ENCODE measurements at regions of chr17 and their contacts with region 1.

Region 1: DNA sequence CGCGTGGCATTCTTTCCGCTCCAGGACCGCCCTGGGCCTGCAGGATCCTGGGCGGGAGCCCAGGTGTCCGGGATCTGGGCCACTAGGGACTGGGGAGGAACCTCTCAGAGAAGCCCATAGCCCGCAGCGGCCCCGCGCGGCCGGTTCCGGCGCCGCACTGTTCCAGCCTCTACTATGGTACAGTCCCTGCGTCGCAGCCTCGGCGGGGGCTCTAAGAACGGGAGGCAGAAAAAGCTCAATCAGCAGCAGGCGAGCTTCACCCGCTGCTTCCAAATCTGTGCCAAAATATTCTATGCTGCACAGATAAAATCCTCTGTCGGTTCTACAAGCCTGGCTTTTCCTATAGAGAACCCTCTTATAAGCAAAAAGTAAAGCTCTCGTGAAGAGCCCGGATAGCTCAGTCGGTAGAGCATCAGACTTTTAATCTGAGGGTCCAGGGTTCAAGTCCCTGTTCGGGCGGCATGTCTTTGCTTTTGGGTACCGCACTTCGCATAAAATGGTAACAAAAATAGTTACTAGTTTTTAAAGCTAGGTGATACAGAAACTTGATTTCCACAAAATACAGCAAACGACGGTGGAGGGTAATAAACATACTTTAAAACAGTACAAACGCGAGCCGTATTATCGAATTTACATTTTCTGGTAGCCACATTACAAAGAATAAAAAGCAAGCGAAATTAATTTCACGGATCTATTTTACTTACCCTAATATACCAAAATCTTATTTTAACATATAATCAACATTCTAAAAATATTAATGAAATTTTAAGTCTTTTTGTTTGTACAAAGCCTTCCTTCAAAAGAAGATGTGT is 661 bp upstream of the ALOXE3 start:
- DNase-seq: peak; percentile 88 to 93 (median 91)
- ATAC-seq: peak; percentile 76 to 88 (median 84)
- H3K4me3 ChIP-seq: peak overlapping the region; percentile 29 to 49 (median 37)
- H3K27ac ChIP-seq: peak overlapping the region; percentile 13 to 41 (median 33)
- H3K4me1 ChIP-seq: peaks cover 0 to 45% (median 10%) of the 10 kb centered on the region in 4 donors
- H3K27me3 ChIP-seq: peaks cover 0 to 35% of the 10 kb centered on the region in 2 donors
- CTCF ChIP-seq: peak; percentile 86 to 94 (median 90)
- POLR2A ChIP-seq: no peak

Region 2: DNA sequence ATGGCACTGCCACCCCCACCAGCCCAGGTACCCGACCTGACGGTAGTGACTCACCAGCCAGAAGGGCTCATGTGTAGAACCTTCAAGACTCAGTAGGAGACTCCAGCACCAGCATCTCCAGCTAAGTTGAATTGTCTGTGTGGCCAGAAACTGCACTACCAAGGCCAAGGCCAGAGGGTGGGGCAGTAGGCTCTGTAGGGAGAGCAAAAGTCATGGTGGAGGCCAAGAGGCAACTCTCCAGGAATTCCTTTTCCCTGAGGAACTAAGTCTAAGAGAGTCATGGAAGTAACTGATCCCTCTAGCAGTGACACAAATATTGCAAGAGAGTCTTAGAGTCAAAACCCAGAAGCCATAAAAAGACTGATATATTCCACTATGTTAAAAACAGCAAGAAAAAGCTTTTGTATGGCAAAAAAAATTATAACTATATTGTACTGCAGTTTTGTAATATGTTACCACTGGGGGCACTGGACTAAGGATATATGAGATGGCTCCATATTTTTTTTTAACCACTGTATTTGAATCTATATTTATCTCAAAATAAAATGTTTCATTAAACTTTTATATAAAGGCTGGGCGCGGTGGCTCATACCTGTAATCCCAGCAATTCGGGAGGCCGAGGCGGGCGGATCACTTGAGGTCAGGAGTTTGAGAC is 146.7 kb before region 1 on chr17:
- intact Hi-C with region 1: no loop called
- DNase-seq: peak in 1 of 3 donors; percentile 29
- ATAC-seq: no peak
- H3K4me3 ChIP-seq: no peak overlapping the region
- H3K27ac ChIP-seq: no peak overlapping the region
- H3K4me1 ChIP-seq: no peaks in the 10 kb centered on the region
- H3K27me3 ChIP-seq: no peaks in the 10 kb centered on the region
- CTCF ChIP-seq: no peak
- POLR2A ChIP-seq: no peak

Region 3: GRCh38 chr17:8048736-8049135 is 70.2 kb before region 1 on chr17:
- intact Hi-C with region 1: no loop called
- DNase-seq: no peak
- ATAC-seq: no peak
- H3K4me3 ChIP-seq: no peak overlapping the region
- H3K27ac ChIP-seq: no peak overlapping the region
- H3K4me1 ChIP-seq: no peaks in the 10 kb centered on the region
- H3K27me3 ChIP-seq: no peaks in the 10 kb centered on the region
- CTCF ChIP-seq: no peak
- POLR2A ChIP-seq: no peak

Region 4: DNA sequence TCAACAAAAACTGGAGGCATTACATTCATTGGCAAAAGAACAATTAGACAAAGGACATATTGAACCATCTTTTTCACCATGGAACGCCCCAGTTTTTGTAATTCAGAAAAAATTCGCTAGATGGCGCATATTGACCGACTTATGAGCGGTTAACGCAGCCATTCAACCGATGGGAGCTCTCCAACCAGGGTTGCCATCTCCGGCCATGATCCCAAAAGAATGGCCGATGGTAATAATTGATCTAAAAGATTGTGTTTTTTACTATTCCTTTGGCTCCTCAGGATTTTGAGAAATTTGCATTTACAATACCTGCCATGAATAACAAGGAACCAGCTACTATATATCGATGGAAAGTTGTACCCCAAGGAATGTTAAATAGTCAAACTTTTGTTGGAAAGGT is 58.7 kb before region 1 on chr17:
- intact Hi-C with region 1: loop called in 1 of 2 experiments (anchors 10 kb)
- DNase-seq: no peak
- ATAC-seq: peak; percentile 55 to 70 (median 58)
- H3K4me3 ChIP-seq: no peak overlapping the region
- H3K27ac ChIP-seq: no peak overlapping the region
- H3K4me1 ChIP-seq: peaks cover 0 to 38% (median 6%) of the 10 kb centered on the region in 4 donors
- H3K27me3 ChIP-seq: peaks cover 0 to 17% of the 10 kb centered on the region in 2 donors
- CTCF ChIP-seq: peak; percentile 70 to 80 (median 75)
- POLR2A ChIP-seq: no peak

Region 5: DNA sequence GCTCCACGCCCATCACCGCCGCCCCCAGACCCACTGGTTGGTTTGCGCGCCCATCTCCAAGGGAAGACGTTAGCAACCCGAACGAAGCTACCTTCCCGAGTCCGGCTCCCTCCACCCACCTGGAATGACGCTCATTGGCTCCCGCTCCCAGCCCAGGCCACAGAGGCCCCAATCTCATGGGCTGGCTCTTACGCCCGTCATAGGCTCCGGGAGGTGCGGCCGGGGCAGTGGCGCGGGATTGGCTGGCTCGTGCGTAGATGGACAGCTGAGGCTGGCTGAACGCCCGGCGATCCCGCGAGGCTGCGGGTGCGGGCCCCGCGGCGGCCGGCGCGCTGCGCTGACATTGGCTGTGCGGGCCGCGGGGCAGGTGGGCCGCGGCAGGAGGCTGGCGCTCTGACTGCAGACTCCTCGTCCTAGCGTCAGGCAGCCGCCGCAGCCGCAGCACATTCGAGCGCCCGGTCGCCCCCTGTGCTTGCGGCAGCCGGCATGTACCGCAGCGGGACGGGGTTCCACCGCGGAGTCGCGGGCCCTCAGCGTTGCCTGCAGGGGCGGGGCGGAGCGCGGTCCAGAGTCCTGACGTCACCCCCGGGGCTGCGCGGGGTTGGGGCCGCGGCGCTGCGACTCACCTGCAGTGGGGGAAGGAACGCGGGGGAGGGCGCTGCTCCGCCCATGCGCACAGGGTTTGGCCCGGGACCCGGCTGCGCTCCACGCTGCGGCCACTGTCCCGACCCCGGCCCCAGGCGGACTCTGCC is 512.0 kb after region 1 on chr17:
- intact Hi-C with region 1: no loop called
- DNase-seq: peak; percentile 98 to 99 (median 99)
- ATAC-seq: peak; percentile 93 to 97 (median 94)
- H3K4me3 ChIP-seq: peak overlapping the region; percentile 72 to 74 (median 73)
- H3K27ac ChIP-seq: peak overlapping the region; percentile 70 to 85 (median 83)
- H3K4me1 ChIP-seq: peaks cover 0 to 10% (median 0%) of the 10 kb centered on the region in 4 donors
- H3K27me3 ChIP-seq: no peaks in the 10 kb centered on the region
- CTCF ChIP-seq: peak in 3 of 4 donors; percentile 28 to 38 (median 38)
- POLR2A ChIP-seq: peak; percentile 39

Measured in right lobe of liver (tissue), 6 donors.